ENCODE measurements at regions of chr19 and their contacts with region 1.

Region 1: DNA sequence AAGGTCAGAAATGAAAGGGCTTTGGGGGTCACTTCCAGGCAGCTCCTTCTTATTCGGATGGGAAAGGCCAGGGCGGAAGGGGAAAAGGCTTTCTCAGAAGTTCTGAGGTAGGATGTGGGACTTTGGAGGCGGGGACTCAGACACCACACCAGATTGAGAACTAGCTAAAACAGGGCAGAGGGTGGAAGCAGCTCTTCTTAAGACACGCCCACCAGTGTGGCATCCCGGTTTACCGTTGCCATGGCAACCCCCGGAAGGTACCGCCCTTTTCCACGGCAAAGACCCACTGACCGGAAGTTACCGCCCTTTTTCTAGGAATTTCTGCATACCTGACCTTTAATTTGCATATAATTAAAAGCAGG is 3.8 kb upstream of the LILRA5 start:
- DNase-seq: no peak
- ATAC-seq: no peak
- H3K4me3 ChIP-seq: no peak overlapping the region
- H3K27ac ChIP-seq: no peak overlapping the region
- H3K4me1 ChIP-seq: no peaks in the 10 kb centered on the region
- H3K27me3 ChIP-seq: no peaks in the 10 kb centered on the region
- CTCF ChIP-seq: no peak
- POLR2A ChIP-seq: no peak

Region 2: GRCh38 chr19:54644056-54644455 is 327.3 kb after region 1 on chr19:
- in situ Hi-C with region 1: loop called in 1 of 4 experiments (anchors 25 kb)
- intact Hi-C with region 1: no loop called
- DNase-seq: peak in 1 of 2 donors; percentile 36
- ATAC-seq: no peak
- H3K4me3 ChIP-seq: no peak overlapping the region
- H3K27ac ChIP-seq: no peak overlapping the region
- H3K4me1 ChIP-seq: no peaks in the 10 kb centered on the region
- H3K27me3 ChIP-seq: no peaks in the 10 kb centered on the region
- CTCF ChIP-seq: no peak
- POLR2A ChIP-seq: no peak